Left ventricle myocardium superior (tissue), 1 donor: ENCODE measurements at regions of chr15 and their contacts with region 1.

Region 1: GRCh38 chr15:34209421-34210282 is at the start of gene KATNBL1:
- DNase-seq: peak; percentile 99
- ATAC-seq: peak; percentile 100
- total RNA-seq, gene KATNBL1: 15.3 TPM

Region 2: DNA sequence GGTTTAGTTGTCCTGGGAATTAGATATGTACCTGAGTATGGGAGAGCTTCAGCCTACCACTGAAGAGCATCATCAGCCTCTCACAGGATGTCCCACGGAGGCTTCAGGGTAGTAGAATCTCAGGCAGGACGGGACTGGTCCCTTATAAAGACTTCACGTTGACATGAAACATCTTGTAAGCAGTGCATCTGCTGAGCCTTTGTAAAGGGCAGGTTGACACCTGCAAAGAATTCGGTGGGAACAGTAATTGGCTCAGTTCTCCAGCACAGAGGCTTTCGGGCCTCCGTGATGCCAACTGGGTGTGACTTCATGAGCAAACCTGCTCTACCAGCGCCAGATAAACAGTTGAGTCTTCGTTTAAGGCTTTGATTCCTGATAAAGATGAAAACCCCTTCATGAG is 143.7 kb before region 1 on chr15:
- intact Hi-C with region 1: loop called (anchors 10 kb)
- DNase-seq: no peak
- ATAC-seq: no peak

Region 3: DNA sequence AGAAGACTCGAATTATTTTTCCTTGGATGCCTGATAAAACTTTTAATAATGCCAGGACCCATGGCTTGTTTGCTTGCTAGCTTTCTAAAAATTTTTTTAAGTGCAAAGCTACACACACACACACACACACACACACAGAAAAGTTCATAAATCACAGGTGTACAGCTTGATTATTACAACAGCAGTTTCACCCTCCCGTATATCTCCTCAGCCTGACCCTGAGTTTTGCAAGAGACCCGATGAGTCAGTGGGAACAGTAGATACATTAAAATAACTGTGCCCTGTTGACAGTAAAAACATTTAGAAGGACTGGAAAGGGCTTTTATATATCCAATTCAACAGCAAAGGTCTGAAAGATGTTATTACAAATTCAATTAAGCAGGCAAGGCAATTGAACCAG is 61.8 kb after region 1 on chr15:
- intact Hi-C with region 1: no loop called
- DNase-seq: no peak
- ATAC-seq: peak; percentile 83